Activated naive CD4-positive, alpha-beta T cell treated with anti-CD3 and anti-CD28 coated beads for 36 hours (primary cell): ENCODE measurements at regions of chr10 and their contacts with region 1.

Region 1: DNA sequence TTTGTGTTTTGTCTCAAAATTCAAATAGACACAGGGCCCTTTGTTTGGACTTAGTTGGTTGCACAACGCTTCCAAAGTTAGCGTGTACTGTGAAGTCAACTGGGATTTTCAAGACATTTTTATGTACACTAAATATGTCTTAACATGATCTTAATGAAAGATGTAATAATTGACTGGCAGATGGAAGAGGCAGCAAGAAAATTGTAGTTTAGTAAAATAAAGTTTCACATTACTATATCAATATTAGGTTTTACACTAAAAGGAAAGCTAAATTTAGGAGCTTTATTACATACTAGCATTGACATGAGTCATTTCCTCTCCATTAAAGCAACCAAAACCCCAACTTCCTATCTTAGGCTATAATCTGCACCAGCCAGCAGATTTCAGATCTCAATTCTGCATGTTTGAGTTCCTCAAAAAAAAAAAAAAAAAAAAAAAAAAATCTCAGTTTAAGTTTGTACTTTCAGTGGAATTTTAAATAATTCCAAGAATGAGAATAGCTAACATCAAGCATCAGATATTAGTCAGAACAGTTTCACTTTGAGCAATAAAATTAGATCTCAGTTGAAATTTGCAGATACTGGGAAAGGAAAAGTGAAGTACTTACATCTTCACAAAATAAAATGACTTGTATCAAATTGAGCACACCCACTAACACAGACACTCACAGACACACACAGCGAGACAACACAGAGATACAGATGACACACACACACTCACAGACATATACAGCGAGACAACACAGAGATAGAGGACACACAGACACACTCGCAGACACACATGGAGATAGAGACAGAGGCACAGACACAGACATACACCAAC is 346.6 kb upstream of the KLF6 start:
- DNase-seq: peak; percentile 43
- H3K4me3 Mint-ChIP-seq: no peak overlapping the region
- H3K27ac Mint-ChIP-seq: no peak overlapping the region
- H3K4me1 Mint-ChIP-seq: peaks cover 24% of the 10 kb centered on the region
- H3K27me3 Mint-ChIP-seq: no peaks in the 10 kb centered on the region

Region 2: GRCh38 chr10:3226960-3227744 is 904.5 kb before region 1 on chr10:
- CTCF ChIA-PET with region 1: no interaction called
- intact Hi-C with region 1: loop called (anchors 5 kb)
- DNase-seq: no peak
- H3K4me3 Mint-ChIP-seq: no peak overlapping the region
- H3K27ac Mint-ChIP-seq: no peak overlapping the region
- H3K4me1 Mint-ChIP-seq: peaks cover 22% of the 10 kb centered on the region
- H3K27me3 Mint-ChIP-seq: peaks cover 2% of the 10 kb centered on the region

Region 3: DNA sequence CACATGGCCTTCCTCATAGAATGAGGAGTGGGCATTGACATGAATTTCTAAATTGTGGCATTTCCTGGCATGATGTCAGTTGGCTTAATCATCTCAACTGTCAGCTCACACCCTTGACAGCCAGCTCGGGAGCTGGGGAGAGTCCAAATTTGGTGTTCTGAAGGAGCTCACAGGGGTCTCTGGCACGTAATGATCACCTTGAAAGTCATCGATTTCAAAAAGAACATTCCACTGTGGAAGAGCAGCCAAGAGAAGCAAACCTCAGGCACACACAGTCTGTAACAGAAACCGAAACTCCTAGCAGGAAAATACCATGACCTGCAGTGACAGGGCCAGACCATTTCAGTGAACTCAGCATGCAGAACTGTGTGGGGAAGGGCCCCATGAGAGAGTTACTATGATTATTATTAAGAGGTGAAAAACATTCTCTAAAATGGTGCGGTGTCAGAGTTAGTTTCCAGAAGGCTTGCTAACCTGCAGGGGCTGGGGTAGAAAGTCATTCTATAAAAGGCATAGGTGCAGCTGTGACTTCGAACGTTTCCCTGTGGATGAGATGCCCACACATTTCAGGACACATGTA is 320.2 kb before region 1 on chr10:
- CTCF ChIA-PET with region 1: no interaction called
- intact Hi-C with region 1: loop called (anchors 1 kb)
- DNase-seq: peak; percentile 82
- H3K4me3 Mint-ChIP-seq: peak overlapping the region; percentile 52
- H3K27ac Mint-ChIP-seq: peak overlapping the region; percentile 96
- H3K4me1 Mint-ChIP-seq: peaks cover 76% of the 10 kb centered on the region
- H3K27me3 Mint-ChIP-seq: no peaks in the 10 kb centered on the region

Region 4: GRCh38 chr10:3873728-3874461 is 257.7 kb before region 1 on chr10:
- CTCF ChIA-PET with region 1: no interaction called
- intact Hi-C with region 1: loop called (anchors 2 kb)
- DNase-seq: no peak
- H3K4me3 Mint-ChIP-seq: no peak overlapping the region
- H3K27ac Mint-ChIP-seq: peak overlapping the region; percentile 36
- H3K4me1 Mint-ChIP-seq: peaks cover 52% of the 10 kb centered on the region
- H3K27me3 Mint-ChIP-seq: no peaks in the 10 kb centered on the region

Region 5: GRCh38 chr10:4034907-4035598 is 96.6 kb before region 1 on chr10:
- CTCF ChIA-PET with region 1: no interaction called
- intact Hi-C with region 1: loop called (anchors 1 kb)
- DNase-seq: peak; percentile 43
- H3K4me3 Mint-ChIP-seq: peak overlapping the region; percentile 41
- H3K27ac Mint-ChIP-seq: no peak overlapping the region
- H3K4me1 Mint-ChIP-seq: peaks cover 30% of the 10 kb centered on the region
- H3K27me3 Mint-ChIP-seq: no peaks in the 10 kb centered on the region